ENCODE measurements at regions of chr10 and their contacts with region 1.

Region 1: GRCh38 chr10:8245131-8245813 is 190.8 kb downstream of the GATA3 start:
- DNase-seq: no peak
- ATAC-seq: no peak
- H3K4me3 Mint-ChIP-seq: peak overlapping the region; percentile 48
- H3K27ac Mint-ChIP-seq: peak overlapping the region; percentile 70
- H3K4me1 Mint-ChIP-seq: peaks cover 49% of the 10 kb centered on the region
- H3K27me3 Mint-ChIP-seq: no peaks in the 10 kb centered on the region

Region 2: GRCh38 chr10:9294865-9295264 is 1049.6 kb after region 1 on chr10:
- CTCF ChIA-PET with region 1: no interaction called
- POLR2A ChIA-PET with region 1: no interaction called
- intact Hi-C with region 1: loop called in 1 of 2 experiments (anchors 5 kb)
- DNase-seq: peak; percentile 5
- ATAC-seq: peak; percentile 85
- H3K4me3 Mint-ChIP-seq: no peak overlapping the region
- H3K27ac Mint-ChIP-seq: no peak overlapping the region
- H3K4me1 Mint-ChIP-seq: peaks cover 18% of the 10 kb centered on the region
- H3K27me3 Mint-ChIP-seq: peaks cover 9% of the 10 kb centered on the region

Measured in activated CD4-positive, alpha-beta T cell treated with anti-CD3 and anti-CD28 coated beads for 36 hours (primary cell).